ENCODE measurements at regions of chr7 and their contacts with region 1.

Region 1: GRCh38 chr7:44847508-44847920 is 373 bp downstream of the H2AZ2 start:
- DNase-seq: peak; percentile 89
- H3K4me3 Mint-ChIP-seq: peak overlapping the region; percentile 96
- H3K27ac Mint-ChIP-seq: peak overlapping the region; percentile 99
- H3K4me1 Mint-ChIP-seq: peaks cover 42% of the 10 kb centered on the region
- H3K27me3 Mint-ChIP-seq: no peaks in the 10 kb centered on the region

Region 2: DNA sequence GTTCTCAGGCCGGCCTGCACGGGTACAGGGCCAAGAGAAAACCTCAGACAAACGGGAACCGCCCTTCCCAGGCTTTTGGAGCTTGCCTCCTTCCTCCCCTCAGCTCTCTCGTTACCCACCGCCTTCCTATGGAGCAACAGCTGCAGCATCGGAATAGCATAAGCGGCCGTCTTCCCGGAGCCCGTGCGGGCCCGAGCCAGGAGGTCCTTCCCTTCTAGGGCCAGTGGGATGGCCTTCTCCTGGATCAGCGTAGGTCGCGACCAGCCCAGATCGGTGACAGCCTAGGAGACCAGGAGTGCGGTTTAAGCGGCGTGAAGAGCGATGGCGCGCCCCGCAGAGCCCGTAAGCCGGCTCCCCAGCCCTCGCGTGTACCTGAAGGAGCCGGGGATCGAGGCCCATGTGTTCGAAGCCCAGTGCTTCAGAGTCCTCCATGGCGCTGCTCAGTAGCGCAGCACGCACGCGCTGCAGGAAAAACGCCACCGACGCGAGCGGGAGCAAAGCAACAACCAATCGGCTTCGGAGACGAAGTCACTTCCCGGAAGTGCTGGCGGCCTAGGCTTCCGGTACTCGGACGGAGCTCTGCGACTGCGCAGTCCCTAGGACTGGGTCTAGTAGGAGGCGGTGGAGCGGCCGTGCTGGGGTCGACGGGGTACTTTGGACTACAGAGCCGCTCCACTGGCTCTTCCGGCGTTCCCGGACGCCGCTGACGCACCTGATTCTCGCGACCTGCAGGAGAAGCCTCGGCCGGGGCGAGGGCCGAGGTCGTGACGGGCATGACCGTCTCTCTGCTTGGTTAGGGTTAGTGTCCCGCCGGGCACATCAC is 273.8 kb before region 1 on chr7 and contains the start of gene DDX56:
- CTCF ChIA-PET with region 1: interaction called, 3 read pairs
- POLR2A ChIA-PET with region 1: interaction called, 20 read pairs
- DNase-seq: peak; percentile 94
- H3K4me3 Mint-ChIP-seq: peak within 1 kb of the TSS; percentile 96
- H3K27ac Mint-ChIP-seq: peak within 1 kb of the TSS; percentile 87
- H3K4me1 Mint-ChIP-seq: peaks cover 44% of the 10 kb centered on the region
- H3K27me3 Mint-ChIP-seq: no peaks in the 10 kb centered on the region
- total RNA-seq, gene DDX56: 59.0 to 59.6 TPM

Region 3: DNA sequence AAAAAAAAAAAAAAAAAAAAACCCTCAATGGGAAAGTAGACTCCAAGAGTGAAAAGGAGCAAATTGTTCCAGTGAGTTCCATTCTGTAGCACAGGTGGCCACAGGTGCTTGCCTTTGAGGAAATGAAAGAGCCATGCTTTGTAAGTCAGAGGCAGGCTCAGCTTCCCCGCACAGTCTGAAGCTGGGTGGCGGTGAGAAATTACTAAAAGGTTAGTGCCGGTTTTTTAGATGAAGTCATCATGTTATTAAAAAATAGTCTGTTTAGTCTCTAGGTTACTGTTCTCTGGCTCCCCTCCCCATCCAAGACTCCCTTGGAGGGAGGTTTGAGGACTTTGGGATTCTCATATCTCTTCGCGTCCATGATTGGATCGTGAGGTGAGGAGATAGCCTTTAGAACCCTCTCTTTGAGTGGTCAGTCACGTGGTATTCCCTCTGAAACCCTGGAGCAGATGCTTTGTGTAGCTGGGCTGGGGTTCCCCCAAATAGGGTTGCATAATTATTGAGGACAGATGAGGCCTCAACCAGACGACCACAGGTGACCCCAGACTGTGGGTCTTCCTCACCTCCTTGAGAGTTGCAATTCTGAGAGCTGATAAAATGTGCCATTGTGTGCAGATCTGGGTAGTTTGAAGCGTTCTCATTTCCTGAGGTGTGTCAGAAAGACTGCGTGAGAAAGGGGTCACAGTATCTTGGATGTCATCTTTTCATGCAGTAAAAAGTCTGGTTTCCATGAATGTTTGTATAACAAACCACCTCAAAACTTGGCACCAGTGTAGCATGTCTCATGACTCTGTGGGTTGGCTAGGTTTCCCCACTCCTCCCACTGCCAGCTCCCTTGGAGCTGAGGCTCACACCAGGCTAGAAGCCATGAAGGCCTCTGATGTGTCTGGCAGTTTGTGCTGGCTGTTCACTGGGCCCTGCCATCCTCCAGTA is 214.0 kb before region 1 on chr7:
- CTCF ChIA-PET with region 1: interaction called, 6 read pairs
- POLR2A ChIA-PET with region 1: interaction called, 70 read pairs
- DNase-seq: peak; percentile 67
- H3K4me3 Mint-ChIP-seq: no peak overlapping the region
- H3K27ac Mint-ChIP-seq: peak overlapping the region; percentile 100
- H3K4me1 Mint-ChIP-seq: peaks cover 99% of the 10 kb centered on the region
- H3K27me3 Mint-ChIP-seq: no peaks in the 10 kb centered on the region

Region 4: DNA sequence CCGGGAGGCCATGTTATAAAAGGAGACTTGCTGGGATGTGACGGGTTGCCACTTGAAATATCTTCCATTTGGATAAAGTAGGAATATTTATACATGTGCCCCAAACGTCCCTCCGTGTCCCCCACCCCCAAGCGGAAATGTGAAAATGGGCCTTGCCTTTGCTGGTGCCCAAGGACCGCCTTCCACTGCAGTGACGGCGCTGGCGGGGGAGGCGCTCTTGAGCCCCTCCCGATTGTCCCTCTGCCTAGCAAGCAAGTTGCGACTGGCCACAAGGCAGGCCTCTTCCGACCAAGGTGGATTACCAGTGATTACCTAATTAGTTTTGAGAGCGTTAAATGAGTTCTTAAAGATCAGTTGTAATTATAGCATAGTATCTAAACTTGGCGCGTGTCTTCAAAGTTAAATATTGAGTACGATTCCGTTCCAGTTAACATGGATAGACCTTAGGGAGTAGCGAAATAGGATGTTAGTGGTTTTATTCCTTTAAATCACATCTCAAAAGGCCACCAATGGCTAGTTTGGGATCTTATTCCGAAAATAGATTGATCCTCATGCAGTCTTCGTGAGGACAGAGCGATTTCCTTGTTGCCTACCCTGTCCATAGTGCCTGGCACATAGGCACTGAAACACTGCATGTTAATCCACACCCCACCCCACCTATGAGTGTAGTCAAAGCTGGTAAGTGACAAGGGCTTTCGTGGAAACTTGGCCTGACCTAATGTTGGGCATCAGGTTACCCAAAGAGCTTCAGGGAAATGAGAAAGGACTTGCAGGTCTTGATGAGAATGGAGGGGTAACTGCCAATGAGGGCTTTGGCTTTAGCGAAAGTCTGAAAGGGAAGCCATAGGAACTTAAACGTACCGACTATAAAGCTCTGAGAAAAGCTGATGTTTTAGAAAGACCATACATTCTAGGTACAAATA is 49.9 kb before region 1 on chr7:
- CTCF ChIA-PET with region 1: interaction called, 5 read pairs
- POLR2A ChIA-PET with region 1: interaction called, 107 read pairs
- DNase-seq: peak; percentile 89
- H3K4me3 Mint-ChIP-seq: peak overlapping the region; percentile 81
- H3K27ac Mint-ChIP-seq: peak overlapping the region; percentile 93
- H3K4me1 Mint-ChIP-seq: peaks cover 44% of the 10 kb centered on the region
- H3K27me3 Mint-ChIP-seq: no peaks in the 10 kb centered on the region

Region 5: DNA sequence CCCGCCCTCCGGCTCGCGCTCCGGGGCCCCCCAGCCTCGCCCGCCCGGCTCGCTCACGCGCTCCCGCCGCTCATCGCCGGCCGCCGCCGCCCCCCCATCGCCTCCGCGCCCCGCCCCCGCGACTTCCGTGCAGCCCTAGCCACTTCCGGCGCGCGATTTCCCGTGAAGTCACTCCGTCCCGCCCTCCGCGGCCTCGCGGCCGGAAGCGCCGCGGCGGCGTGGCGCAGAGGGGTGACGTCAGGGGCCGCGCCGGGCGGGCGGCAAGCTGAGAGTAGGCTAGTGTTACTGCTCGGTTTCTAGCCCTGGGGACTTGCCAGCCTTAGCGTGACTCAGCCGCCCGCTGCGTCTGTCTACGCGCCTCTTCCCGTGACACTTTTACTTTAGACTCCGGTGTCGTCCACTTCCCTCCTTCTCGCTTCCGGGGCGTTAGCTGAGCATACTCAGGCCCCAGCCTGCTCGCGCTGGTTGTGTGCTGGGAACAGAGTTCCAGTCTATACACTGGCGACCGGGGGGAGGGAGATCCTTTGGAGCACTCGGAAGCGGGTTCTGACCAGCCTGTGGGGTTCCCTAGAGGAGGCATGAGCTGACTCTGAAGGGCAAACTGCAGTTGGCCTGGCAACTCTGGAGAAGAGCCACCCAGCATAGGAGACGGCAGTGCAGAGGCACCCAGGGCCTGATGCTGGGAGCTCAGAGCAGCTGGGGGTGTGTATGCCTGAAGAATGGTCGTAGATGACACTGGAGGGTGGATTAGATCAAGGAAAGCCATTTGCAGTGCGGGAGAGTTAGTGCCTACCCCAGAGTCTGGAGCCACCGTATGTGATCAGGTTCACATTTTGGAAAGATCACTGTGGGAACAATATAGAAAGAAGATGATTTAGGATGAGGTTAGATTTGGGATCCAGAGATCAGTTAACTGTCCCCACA is 38.1 kb after region 1 on chr7 and contains the start of gene PURB:
- CTCF ChIA-PET with region 1: interaction called, 22 read pairs
- POLR2A ChIA-PET with region 1: interaction called, 144 read pairs
- DNase-seq: peak; percentile 97
- H3K4me3 Mint-ChIP-seq: peak within 1 kb of the TSS; percentile 95
- H3K27ac Mint-ChIP-seq: peak within 1 kb of the TSS; percentile 99
- H3K4me1 Mint-ChIP-seq: peaks cover 64% of the 10 kb centered on the region
- H3K27me3 Mint-ChIP-seq: no peaks in the 10 kb centered on the region
- total RNA-seq, gene PURB: 27.7 to 29.3 TPM

Region 6: GRCh38 chr7:44980393-44981034 is 133.0 kb after region 1 on chr7:
- CTCF ChIA-PET with region 1: interaction called, 4 read pairs
- POLR2A ChIA-PET with region 1: interaction called, 23 read pairs
- DNase-seq: peak; percentile 75
- H3K4me3 Mint-ChIP-seq: peak overlapping the region; percentile 99
- H3K27ac Mint-ChIP-seq: peak overlapping the region; percentile 96
- H3K4me1 Mint-ChIP-seq: peaks cover 76% of the 10 kb centered on the region
- H3K27me3 Mint-ChIP-seq: no peaks in the 10 kb centered on the region

Region 7: GRCh38 chr7:45146531-45147379 is 299.2 kb after region 1 on chr7:
- CTCF ChIA-PET with region 1: no interaction called
- POLR2A ChIA-PET with region 1: no interaction called
- DNase-seq: no peak
- H3K4me3 Mint-ChIP-seq: no peak overlapping the region
- H3K27ac Mint-ChIP-seq: no peak overlapping the region
- H3K4me1 Mint-ChIP-seq: no peaks in the 10 kb centered on the region
- H3K27me3 Mint-ChIP-seq: peaks cover 28% of the 10 kb centered on the region